HepG2 (cell line): ENCODE measurements at regions of chr1 and their contacts with region 1.

Region 1: GRCh38 chr1:182249201-182249676 is 142.4 kb downstream of the GLUL start:
- DNase-seq: peak; percentile 90
- ATAC-seq: peak; percentile 100
- H3K4me3 ChIP-seq: peak overlapping the region in 2 of 3 experiments; percentile 49 to 61; a peak in 2 of 6 replicates
- H3K27ac ChIP-seq: peak overlapping the region; percentile 80
- H3K4me1 ChIP-seq: peaks cover 28% of the 10 kb centered on the region
- H3K27me3 ChIP-seq: no peaks in the 10 kb centered on the region
- CTCF ChIP-seq: no peak
- EP300 ChIP-seq: peak in 1 of 2 experiments; percentile 44; a peak in 1 of 4 replicates
- POLR2A ChIP-seq: peak in 1 of 2 experiments; percentile 51; a peak in 1 of 4 replicates
- RAD21 ChIP-seq: 0 out of 2 replicates have a peak, but pooled peaks have one; percentile 19

Region 2: DNA sequence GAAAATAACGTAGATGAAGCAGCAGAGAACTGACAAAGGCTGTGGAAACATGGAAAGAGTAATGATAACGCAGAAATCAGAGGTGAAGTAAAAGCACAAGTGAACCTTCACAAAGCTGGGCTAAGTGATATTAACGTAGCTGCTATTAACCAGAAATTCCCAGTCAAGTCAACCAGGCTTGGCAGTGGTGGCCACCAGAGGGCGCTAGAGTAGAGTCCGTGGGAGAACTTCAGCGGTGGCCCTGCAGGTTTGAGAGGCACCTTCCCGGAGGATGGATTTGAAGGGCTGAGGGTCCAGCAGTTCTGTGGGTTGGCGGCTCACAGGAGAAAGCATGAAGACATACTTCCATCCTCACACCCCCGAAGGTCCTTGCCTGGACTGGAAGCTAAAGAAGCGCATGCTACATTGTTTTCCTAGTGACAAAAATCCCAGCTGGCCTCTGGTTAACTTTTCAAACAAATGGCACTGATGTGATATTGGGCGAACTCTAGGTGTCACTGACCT is 106.0 kb before region 1 on chr1:
- CTCF ChIA-PET with region 1: no interaction called
- POLR2A ChIA-PET with region 1: interaction called, 4 read pairs
- in situ Hi-C with region 1: loop called (anchors 10 kb)
- intact Hi-C with region 1: no loop called
- DNase-seq: peak; percentile 71
- ATAC-seq: peak; percentile 90
- H3K4me3 ChIP-seq: peak overlapping the region in 1 of 3 experiments; percentile 30; a peak in 2 of 6 replicates
- H3K27ac ChIP-seq: no peak overlapping the region
- H3K4me1 ChIP-seq: peaks cover 51% of the 10 kb centered on the region
- H3K27me3 ChIP-seq: no peaks in the 10 kb centered on the region
- CTCF ChIP-seq: peak; percentile 95
- EP300 ChIP-seq: no peak
- POLR2A ChIP-seq: no peak
- RAD21 ChIP-seq: peak; percentile 92

Region 3: GRCh38 chr1:182629499-182630096 is 380.4 kb after region 1 on chr1:
- CTCF ChIA-PET with region 1: no interaction called
- POLR2A ChIA-PET with region 1: no interaction called
- in situ Hi-C with region 1: no loop called
- intact Hi-C with region 1: no loop called
- DNase-seq: no peak
- ATAC-seq: no peak
- H3K4me3 ChIP-seq: no peak overlapping the region
- H3K27ac ChIP-seq: no peak overlapping the region
- H3K4me1 ChIP-seq: no peaks in the 10 kb centered on the region
- H3K27me3 ChIP-seq: peaks cover 0 to under 1% of the 10 kb centered on the region in 2 experiments; a peak in 1 of 5 replicates
- CTCF ChIP-seq: no peak
- EP300 ChIP-seq: no peak
- POLR2A ChIP-seq: no peak
- RAD21 ChIP-seq: no peak